Activated CD4-positive, alpha-beta memory T cell treated with anti-CD3 and anti-CD28 coated beads for 36 hours (primary cell): ENCODE measurements at regions of chr15 and their contacts with region 1.

Region 1: GRCh38 chr15:82197733-82198594 is 64.6 kb downstream of the EFL1 start:
- DNase-seq: peak; percentile 62
- H3K4me3 Mint-ChIP-seq: no peak overlapping the region
- H3K27ac Mint-ChIP-seq: no peak overlapping the region
- H3K4me1 Mint-ChIP-seq: no peaks in the 10 kb centered on the region
- H3K27me3 Mint-ChIP-seq: no peaks in the 10 kb centered on the region

Region 2: DNA sequence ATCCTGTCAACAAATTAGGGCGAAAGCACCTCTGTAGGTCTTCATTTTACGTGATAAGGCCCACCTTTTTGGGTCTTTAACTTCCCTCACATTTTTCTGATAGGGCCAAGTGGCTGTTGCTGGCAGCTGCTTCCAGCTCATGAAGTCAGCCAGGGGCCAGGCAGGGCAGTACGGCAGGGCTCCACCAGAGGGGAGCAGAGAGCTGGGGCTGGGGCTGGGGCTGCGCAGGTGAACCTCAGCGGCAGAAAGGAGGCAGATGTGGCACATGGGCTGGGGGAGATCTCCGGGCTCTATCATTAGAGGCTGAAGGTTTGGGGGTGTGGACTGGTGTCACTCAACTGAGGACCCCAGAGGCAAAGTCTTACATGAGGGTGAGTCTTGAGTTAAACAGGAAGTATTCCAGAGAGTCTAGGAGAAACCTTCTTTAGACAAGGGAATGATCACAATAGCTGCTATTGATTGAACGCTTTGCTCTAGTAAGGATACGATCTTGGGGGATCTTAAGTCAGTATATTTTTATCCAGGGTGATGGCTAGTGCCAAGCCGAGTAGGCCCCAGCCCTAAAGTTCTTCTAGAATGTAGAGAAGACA is 89.4 kb before region 1 on chr15:
- CTCF ChIA-PET with region 1: interaction called, 10 read pairs
- POLR2A ChIA-PET with region 1: no interaction called
- intact Hi-C with region 1: loop called (anchors 1 kb)
- DNase-seq: peak; percentile 82
- H3K4me3 Mint-ChIP-seq: no peak overlapping the region
- H3K27ac Mint-ChIP-seq: no peak overlapping the region
- H3K4me1 Mint-ChIP-seq: no peaks in the 10 kb centered on the region
- H3K27me3 Mint-ChIP-seq: peaks cover 4% of the 10 kb centered on the region